PC-3 (cell line): ENCODE measurements at regions of chr19 and their contacts with region 1.

Region 1: DNA sequence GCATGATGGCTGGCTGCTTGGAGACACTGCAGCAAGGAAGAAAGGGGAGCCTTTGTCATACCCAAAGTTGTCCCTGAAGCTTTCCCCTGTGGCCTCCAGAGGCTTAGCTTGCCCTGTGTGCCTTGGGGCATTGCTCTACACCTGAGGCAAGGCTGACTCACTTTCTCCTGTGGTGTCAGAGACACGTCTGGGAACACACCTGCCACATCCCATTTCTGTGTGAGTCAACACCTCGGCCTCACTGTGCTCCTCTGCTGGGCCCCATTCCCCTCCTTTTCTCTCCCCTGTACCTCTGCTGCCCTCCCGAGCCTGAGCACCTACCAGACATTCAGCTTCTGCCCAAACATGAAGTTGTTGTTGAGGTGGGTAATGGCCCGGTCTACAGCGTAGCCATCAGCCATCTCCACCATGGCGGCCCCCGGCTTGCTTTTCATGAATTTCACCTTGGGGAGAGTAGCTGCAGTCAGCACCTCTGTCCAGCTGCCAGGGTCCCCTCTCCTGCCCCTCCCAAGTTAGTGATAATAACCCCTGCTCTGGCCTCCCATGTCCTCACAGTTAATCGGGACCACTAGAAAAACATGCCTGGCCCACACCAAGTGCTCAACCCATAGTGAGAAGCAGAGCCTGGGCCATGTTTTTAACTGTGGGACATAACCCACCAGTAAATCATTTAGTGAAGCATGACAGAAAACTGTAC is 7.1 kb upstream of the ECH1 start:
- DNase-seq: peak; percentile 94
- ATAC-seq: peak; percentile 69
- H3K4me3 ChIP-seq: peak overlapping the region; percentile 28; the same call in 1 of the 2 replicates
- H3K27ac ChIP-seq: peak overlapping the region; percentile 99
- H3K4me1 ChIP-seq: peaks cover 54% of the 10 kb centered on the region
- H3K27me3 ChIP-seq: no peaks in the 10 kb centered on the region
- CTCF ChIP-seq: peak; percentile 60

Region 2: GRCh38 chr19:38524369-38524768 is 314.4 kb before region 1 on chr19:
- CTCF ChIA-PET with region 1: no interaction called
- POLR2A ChIA-PET with region 1: interaction called, 10 read pairs
- intact Hi-C with region 1: no loop called
- DNase-seq: no peak
- ATAC-seq: no peak
- H3K4me3 ChIP-seq: no peak overlapping the region
- H3K27ac ChIP-seq: no peak overlapping the region
- H3K4me1 ChIP-seq: no peaks in the 10 kb centered on the region
- H3K27me3 ChIP-seq: no peaks in the 10 kb centered on the region
- CTCF ChIP-seq: no peak

Region 3: GRCh38 chr19:38544034-38544958 is 294.4 kb before region 1 on chr19:
- CTCF ChIA-PET with region 1: no interaction called
- POLR2A ChIA-PET with region 1: interaction called, 11 read pairs
- intact Hi-C with region 1: no loop called
- DNase-seq: peak; percentile 80
- ATAC-seq: peak; percentile 92
- H3K4me3 ChIP-seq: peak overlapping the region; percentile 47; the same call in 1 of the 2 replicates
- H3K27ac ChIP-seq: peak overlapping the region; percentile 32; the same call in 1 of the 2 replicates
- H3K4me1 ChIP-seq: peaks cover 4% of the 10 kb centered on the region; the same call in 1 of the 2 replicates
- H3K27me3 ChIP-seq: no peaks in the 10 kb centered on the region
- CTCF ChIP-seq: peak; percentile 74

Region 4: DNA sequence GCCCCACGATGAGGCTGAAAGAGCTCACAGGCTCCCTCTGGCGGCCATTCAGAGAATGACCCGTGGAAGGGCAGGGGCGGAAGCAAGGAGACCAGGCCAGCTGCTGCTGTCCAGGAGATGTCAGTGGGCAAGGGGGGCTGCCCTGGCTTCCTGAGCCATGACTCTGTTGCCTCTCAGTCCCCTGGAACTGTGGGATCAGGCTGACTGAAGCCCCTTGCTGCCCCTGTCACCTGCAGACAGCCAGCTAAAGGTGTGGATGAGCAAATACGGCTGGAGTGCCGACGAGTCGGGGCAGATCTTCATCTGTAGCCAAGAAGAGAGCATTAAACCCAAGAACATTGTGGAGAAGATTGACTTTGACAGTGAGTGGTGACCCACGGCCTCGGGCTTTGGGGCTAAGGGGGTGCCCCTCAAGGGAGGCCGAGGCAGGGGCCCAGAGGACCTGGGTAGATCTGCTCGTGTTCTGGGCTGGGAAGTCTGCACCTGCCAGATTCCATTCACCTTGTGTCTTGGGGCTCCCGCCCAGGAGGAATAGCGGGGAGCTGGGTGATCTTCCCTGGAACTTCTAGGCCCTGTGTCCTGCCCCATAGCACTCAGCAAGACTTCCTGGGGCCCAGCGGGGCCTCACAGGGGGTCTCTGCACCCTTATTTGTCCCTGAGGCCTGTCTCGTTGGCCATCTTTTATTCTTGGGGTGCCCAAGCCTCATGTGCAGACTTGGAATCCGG is 203.8 kb before region 1 on chr19:
- CTCF ChIA-PET with region 1: no interaction called
- POLR2A ChIA-PET with region 1: interaction called, 4 read pairs
- intact Hi-C with region 1: loop called (anchors 5 kb)
- DNase-seq: peak; percentile 73
- ATAC-seq: peak; percentile 27; the same call in 1 of the 2 replicates
- H3K4me3 ChIP-seq: no peak overlapping the region
- H3K27ac ChIP-seq: no peak overlapping the region
- H3K4me1 ChIP-seq: peaks cover 25% of the 10 kb centered on the region
- H3K27me3 ChIP-seq: no peaks in the 10 kb centered on the region
- CTCF ChIP-seq: peak; percentile 78

Region 5: GRCh38 chr19:38729653-38730469 is 108.9 kb before region 1 on chr19:
- CTCF ChIA-PET with region 1: no interaction called
- POLR2A ChIA-PET with region 1: interaction called, 3 read pairs
- intact Hi-C with region 1: loop called (anchors 5 kb)
- DNase-seq: peak; percentile 53
- ATAC-seq: peak; percentile 46
- H3K4me3 ChIP-seq: no peak overlapping the region
- H3K27ac ChIP-seq: no peak overlapping the region
- H3K4me1 ChIP-seq: peaks cover 12% of the 10 kb centered on the region
- H3K27me3 ChIP-seq: no peaks in the 10 kb centered on the region
- CTCF ChIP-seq: peak; percentile 74